ENCODE measurements at regions of chr14 and their contacts with region 1.

Region 1: GRCh38 chr14:89773644-89774316 is 180.8 kb downstream of the EFCAB11 start:
- DNase-seq: peak; percentile 39
- H3K4me3 Mint-ChIP-seq: peak overlapping the region; percentile 7
- H3K27ac Mint-ChIP-seq: no peak overlapping the region
- H3K4me1 Mint-ChIP-seq: peaks cover 23% of the 10 kb centered on the region
- H3K27me3 Mint-ChIP-seq: peaks cover 10% of the 10 kb centered on the region

Region 2: DNA sequence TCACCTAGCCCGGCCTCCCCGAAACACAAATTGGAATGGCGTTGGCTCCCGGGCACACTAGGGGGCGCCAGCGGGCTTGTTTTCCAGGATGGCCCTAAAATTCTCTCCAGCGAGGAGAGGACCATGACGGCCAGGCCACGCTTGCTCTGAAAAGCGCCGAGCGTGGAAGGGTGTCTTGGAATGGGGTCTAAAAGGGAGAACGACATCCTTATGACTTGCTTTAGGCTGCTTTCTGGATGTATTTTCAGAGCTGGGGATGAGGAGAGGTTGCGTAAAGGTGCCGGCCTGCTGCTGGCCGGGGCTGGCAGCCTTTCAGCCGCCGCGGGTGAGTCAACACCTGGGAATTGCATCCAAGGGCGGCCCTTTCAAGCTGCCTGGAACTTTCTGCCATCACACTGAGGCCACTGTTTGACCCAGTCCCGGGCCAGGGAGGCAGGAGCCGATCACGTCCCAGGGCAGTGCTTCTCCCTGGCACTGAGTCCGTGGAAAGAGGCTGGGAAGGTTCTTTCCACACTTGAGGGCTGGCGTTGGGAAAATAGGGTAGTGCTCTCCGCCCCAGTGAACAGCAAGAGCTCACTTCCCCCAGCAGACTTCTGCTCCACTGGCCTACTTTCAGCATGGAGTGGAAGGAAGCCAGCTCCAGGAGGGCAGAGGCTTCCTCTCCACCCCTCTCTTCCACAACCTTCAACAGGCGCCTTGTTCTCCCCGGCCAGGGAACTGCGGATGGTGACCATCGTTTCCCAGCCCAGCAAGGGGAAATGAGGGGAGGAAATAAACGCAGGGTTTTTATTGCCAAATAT is 733.1 kb before region 1 on chr14:
- intact Hi-C with region 1: loop called (anchors 2 kb)
- DNase-seq: peak; percentile 68
- H3K4me3 Mint-ChIP-seq: peak overlapping the region; percentile 66
- H3K27ac Mint-ChIP-seq: no peak overlapping the region
- H3K4me1 Mint-ChIP-seq: peaks cover 1% of the 10 kb centered on the region
- H3K27me3 Mint-ChIP-seq: peaks cover 34% of the 10 kb centered on the region

Region 3: GRCh38 chr14:89504602-89505313 is 269.0 kb before region 1 on chr14:
- intact Hi-C with region 1: loop called (anchors 5 kb)
- DNase-seq: no peak
- H3K4me3 Mint-ChIP-seq: no peak overlapping the region
- H3K27ac Mint-ChIP-seq: peak overlapping the region; percentile 51
- H3K4me1 Mint-ChIP-seq: peaks cover 43% of the 10 kb centered on the region
- H3K27me3 Mint-ChIP-seq: no peaks in the 10 kb centered on the region

Region 4: DNA sequence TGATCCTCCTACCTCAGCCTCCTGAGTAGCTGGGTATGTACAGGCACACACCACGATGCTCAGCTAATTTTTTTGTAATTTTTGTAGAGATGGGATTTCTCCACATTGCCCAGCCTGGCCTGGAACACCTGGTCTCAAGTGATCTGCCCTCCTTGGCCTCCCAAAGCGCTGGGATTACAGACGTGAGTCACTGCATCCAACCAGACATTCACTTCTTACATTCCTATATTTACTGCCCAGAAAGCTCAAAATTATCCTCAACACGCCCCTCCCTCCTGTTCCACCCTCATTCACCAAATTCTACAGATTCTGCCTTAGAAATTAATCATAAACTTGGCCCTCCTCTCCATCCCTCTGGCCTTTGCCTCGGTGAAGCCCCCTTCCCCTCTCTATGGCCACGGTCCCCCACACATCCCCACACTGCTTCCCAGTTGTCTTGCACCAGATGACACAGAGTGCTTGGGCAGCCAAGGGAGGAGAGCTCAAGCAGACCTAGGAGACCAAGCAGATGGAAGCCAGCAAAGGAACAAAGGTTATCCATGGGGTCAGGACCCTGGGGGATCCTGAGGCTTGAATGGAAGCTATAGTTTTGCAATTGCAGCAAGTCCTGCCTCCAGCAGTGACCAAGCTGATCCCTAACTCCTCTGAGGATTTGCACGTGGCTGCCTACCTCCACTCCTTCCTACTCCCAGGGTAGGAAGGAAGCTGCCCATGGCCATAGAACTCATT is 143.5 kb before region 1 on chr14:
- intact Hi-C with region 1: no loop called
- DNase-seq: no peak
- H3K4me3 Mint-ChIP-seq: no peak overlapping the region
- H3K27ac Mint-ChIP-seq: peak overlapping the region; percentile 81
- H3K4me1 Mint-ChIP-seq: peaks cover 55% of the 10 kb centered on the region
- H3K27me3 Mint-ChIP-seq: no peaks in the 10 kb centered on the region